Stomach (tissue), 19 donors: ENCODE measurements at regions of chr9 and their contacts with region 1.

Region 1: GRCh38 chr9:112097712-112098688 is 77.1 kb downstream of the SUSD1 start:
- DNase-seq: peak; percentile 66 to 91
- H3K4me3 ChIP-seq: no peak overlapping the region
- H3K27ac ChIP-seq: no peak overlapping the region
- H3K4me1 ChIP-seq: peaks cover 7 to 20% (median 11%) of the 10 kb centered on the region in 4 donors
- H3K27me3 ChIP-seq: no peaks in the 10 kb centered on the region
- CTCF ChIP-seq: peak in 5 of 7 experiments; percentile 52 to 91 (median 82)
- EP300 ChIP-seq: no peak
- POLR2A ChIP-seq: no peak

Region 2: DNA sequence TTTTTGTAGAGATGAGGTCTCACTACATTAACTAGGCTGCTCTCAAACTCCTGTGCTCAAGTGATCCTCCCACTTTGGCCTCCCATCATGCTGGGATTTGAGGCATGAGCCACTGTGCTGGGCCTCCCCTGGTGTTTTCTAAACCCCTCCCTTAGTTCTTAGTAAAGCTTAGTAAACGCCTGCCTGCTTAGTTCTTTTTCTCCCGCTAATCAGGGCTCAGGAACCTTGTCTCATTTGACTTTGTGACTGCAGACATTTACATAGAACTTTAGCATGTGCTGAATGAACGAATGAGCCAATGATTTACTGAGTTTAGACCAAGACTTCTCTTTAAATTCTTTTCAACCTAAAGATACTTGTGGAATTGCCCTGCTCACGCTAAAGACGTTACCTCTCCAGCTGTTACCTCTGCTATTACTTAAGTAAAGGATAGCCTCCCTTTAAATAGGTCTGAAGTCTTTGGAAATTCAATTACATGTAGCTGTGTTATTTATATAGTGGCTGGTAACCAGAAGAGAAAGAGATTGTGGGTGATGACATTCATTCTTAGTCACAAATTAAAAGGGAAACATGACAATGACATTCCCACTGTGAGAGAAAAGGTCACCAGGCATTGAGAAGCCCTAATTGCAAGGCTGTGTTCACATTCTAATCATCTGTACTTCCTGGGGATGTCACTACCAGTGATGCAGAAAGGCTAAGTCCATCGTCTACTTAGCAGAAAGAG is 95.7 kb after region 1 on chr9:
- intact Hi-C with region 1: no loop called
- DNase-seq: no peak
- H3K4me3 ChIP-seq: no peak overlapping the region
- H3K27ac ChIP-seq: no peak overlapping the region
- H3K4me1 ChIP-seq: no peaks in the 10 kb centered on the region
- H3K27me3 ChIP-seq: no peaks in the 10 kb centered on the region
- CTCF ChIP-seq: no peak
- EP300 ChIP-seq: no peak
- POLR2A ChIP-seq: no peak

Region 3: DNA sequence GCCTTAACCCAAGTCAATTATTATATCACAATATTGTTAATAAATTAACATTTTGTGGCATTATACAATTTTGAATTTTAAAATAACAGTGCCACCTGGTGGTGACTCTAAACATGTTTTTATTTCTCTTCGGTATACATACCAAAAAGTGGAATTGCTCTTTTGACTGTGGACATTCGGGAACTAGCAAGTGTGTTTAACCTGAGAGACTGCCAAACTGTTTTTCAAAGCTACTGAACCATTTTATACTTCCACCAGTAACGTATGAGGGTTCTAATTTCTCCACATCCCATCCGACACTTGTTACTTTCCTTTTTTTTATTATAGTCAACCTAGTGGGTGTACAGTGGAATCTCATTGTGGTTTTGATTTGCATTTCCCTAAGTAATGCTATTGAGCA is 263.6 kb after region 1 on chr9:
- intact Hi-C with region 1: loop called (anchors 10 kb)
- DNase-seq: peak in 1 of 2 donors; percentile 70
- H3K4me3 ChIP-seq: no peak overlapping the region
- H3K27ac ChIP-seq: no peak overlapping the region
- H3K4me1 ChIP-seq: peaks cover 0 to 4% (median 0%) of the 10 kb centered on the region in 4 donors
- H3K27me3 ChIP-seq: no peaks in the 10 kb centered on the region
- CTCF ChIP-seq: peak in 5 of 7 experiments; percentile 10 to 85 (median 59)
- EP300 ChIP-seq: no peak
- POLR2A ChIP-seq: no peak

Region 4: GRCh38 chr9:112743216-112743836 is 645.3 kb after region 1 on chr9:
- intact Hi-C with region 1: no loop called
- DNase-seq: no peak
- H3K4me3 ChIP-seq: no peak overlapping the region
- H3K27ac ChIP-seq: no peak overlapping the region
- H3K4me1 ChIP-seq: no peaks in the 10 kb centered on the region
- H3K27me3 ChIP-seq: no peaks in the 10 kb centered on the region
- CTCF ChIP-seq: no peak
- EP300 ChIP-seq: no peak
- POLR2A ChIP-seq: no peak